ENCODE measurements at regions of chr3 and their contacts with region 1.

Region 1: DNA sequence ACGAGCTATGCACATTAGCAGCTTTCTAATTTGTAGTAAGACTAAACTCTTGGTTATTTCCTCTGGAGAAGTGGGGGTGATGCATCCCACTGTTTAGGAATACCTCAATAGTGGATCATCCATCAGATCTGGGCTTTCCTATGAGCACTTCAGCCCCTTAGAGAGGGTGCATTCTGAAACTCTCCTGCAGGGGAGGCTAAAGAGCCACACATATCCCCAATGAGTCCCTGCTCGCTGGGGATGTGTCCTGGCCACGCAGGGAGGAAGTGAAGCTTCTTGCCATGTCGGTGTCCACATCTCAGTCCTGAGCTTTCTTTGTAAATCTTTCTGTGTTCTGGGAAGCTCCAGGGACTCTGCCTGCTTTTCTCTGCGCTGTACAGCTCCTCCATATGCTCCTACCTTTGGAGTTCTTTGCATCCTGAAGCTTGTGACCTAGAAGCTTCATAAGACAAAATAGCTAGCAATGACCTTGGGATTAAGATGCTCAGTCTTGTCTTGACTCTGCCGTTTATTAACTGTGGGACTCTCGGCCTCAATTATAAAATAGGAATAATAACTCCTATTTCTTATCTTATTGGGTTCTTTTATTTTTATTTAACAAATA is 28.3 kb upstream of the MASP1 start:
- DNase-seq: peak; percentile 65
- ATAC-seq: peak; percentile 92
- H3K4me3 ChIP-seq: peak overlapping the region in 1 of 2 experiments; percentile 32; a peak in 3 of 4 replicates
- H3K27ac ChIP-seq: no peak overlapping the region
- H3K4me1 ChIP-seq: peaks cover 0 to 11% of the 10 kb centered on the region in 2 experiments; a peak in 1 of 4 replicates
- H3K27me3 ChIP-seq: peaks cover 33% of the 10 kb centered on the region
- CTCF ChIP-seq: peak; percentile 84 to 92 (median 88)
- POLR2A ChIP-seq: no peak
- RAD21 ChIP-seq: peak; percentile 94

Region 2: GRCh38 chr3:187150599-187150998 is 169.2 kb before region 1 on chr3:
- CTCF ChIA-PET with region 1: no interaction called
- POLR2A ChIA-PET with region 1: no interaction called
- RAD21 ChIA-PET with region 1: no interaction called
- intact Hi-C with region 1: no loop called
- DNase-seq: no peak
- ATAC-seq: peak; percentile 63
- H3K4me3 ChIP-seq: no peak overlapping the region
- H3K27ac ChIP-seq: no peak overlapping the region
- H3K4me1 ChIP-seq: no peaks in the 10 kb centered on the region
- H3K27me3 ChIP-seq: no peaks in the 10 kb centered on the region
- CTCF ChIP-seq: peak; percentile 15 to 42 (median 21); a peak in 3 of 6 replicates
- POLR2A ChIP-seq: no peak
- RAD21 ChIP-seq: peak; percentile 30; the same call in 1 of the 2 replicates

Region 3: GRCh38 chr3:187223799-187224198 is 96.0 kb before region 1 on chr3:
- CTCF ChIA-PET with region 1: interaction called, 40 read pairs
- POLR2A ChIA-PET with region 1: no interaction called
- RAD21 ChIA-PET with region 1: interaction called, 8 to 9 read pairs
- intact Hi-C with region 1: loop called (anchors 1 kb)
- DNase-seq: no peak
- ATAC-seq: no peak
- H3K4me3 ChIP-seq: no peak overlapping the region
- H3K27ac ChIP-seq: no peak overlapping the region
- H3K4me1 ChIP-seq: peaks cover 0 to 6% of the 10 kb centered on the region in 2 experiments; a peak in 2 of 4 replicates
- H3K27me3 ChIP-seq: no peaks in the 10 kb centered on the region; the same call in 1 of the 2 replicates
- CTCF ChIP-seq: no peak
- POLR2A ChIP-seq: no peak
- RAD21 ChIP-seq: no peak

Region 4: GRCh38 chr3:187661267-187661666 is 341.5 kb after region 1 on chr3:
- CTCF ChIA-PET with region 1: interaction called, 11 read pairs
- POLR2A ChIA-PET with region 1: no interaction called
- RAD21 ChIA-PET with region 1: no interaction called
- intact Hi-C with region 1: no loop called
- DNase-seq: no peak
- ATAC-seq: no peak
- H3K4me3 ChIP-seq: no peak overlapping the region
- H3K27ac ChIP-seq: no peak overlapping the region
- H3K4me1 ChIP-seq: no peaks in the 10 kb centered on the region
- H3K27me3 ChIP-seq: peaks cover 30% of the 10 kb centered on the region
- CTCF ChIP-seq: no peak
- POLR2A ChIP-seq: no peak
- RAD21 ChIP-seq: no peak

Region 5: DNA sequence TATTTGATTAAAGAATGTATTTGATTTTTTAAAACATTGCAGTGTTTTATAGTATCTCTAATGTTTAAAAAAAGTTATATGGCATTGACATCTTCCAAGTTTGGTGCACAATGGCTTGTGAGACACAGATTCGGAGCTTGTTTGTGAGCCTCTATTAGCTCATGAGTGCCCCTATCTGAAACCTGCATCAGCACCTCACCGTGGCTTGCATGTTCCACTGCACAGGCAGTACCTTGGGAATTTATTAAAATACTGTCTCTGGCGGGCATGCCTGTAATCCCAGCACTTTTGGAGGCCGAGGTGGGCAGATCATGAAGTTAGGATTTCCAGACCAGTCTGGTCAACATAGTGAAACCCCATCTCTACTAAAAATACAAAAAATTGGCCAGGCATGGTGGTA is 389.4 kb after region 1 on chr3:
- CTCF ChIA-PET with region 1: interaction called, 29 read pairs
- POLR2A ChIA-PET with region 1: no interaction called
- RAD21 ChIA-PET with region 1: interaction called in 1 of 2 experiments, 6 read pairs
- intact Hi-C with region 1: loop called (anchors 1 kb)
- DNase-seq: peak; percentile 31
- ATAC-seq: peak; percentile 98
- H3K4me3 ChIP-seq: no peak overlapping the region
- H3K27ac ChIP-seq: no peak overlapping the region
- H3K4me1 ChIP-seq: peaks cover 0 to 5% of the 10 kb centered on the region in 2 experiments; a peak in 2 of 4 replicates
- H3K27me3 ChIP-seq: no peaks in the 10 kb centered on the region
- CTCF ChIP-seq: peak; percentile 52 to 68 (median 65); a peak in 5 of 6 replicates
- POLR2A ChIP-seq: no peak
- RAD21 ChIP-seq: peak; percentile 29; the same call in 1 of the 2 replicates